ENCODE measurements at regions of chr21 and their contacts with region 1.

Region 1: GRCh38 chr21:37742532-37742931 is 173.7 kb downstream of the KCNJ6 start:
- DNase-seq: no peak
- ATAC-seq: no peak
- H3K4me3 ChIP-seq: no peak overlapping the region
- H3K4me1 ChIP-seq: no peaks in the 10 kb centered on the region
- CTCF ChIP-seq: no peak

Region 2: GRCh38 chr21:37686991-37687810 is 55.3 kb before region 1 on chr21:
- intact Hi-C with region 1: loop called in 1 of 2 experiments (anchors 10 kb)
- DNase-seq: peak in 1 of 3 donors; percentile 7
- ATAC-seq: peak; percentile 19
- H3K4me3 ChIP-seq: no peak overlapping the region
- H3K4me1 ChIP-seq: no peaks in the 10 kb centered on the region
- CTCF ChIP-seq: no peak

Region 3: DNA sequence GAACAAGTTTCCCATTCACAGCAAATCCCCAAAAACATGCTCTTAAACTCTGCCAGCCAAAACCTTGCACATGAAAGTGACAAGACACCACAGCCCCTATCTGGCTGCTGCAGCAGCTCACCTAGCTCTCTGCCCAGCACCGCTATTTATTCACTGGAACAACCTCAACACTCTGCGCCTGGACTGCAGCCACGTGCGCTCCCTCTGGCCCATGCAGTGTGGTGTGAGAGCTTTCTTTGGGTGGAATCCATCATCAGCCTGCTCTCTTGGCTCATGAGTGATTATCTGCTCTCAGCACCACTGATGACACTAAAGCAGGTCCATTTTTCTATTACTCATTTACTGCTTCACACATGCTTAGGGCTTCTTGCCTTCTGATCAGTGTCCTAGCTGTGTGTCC is 162.3 kb after region 1 on chr21:
- intact Hi-C with region 1: no loop called
- DNase-seq: no peak
- ATAC-seq: no peak
- H3K4me3 ChIP-seq: no peak overlapping the region
- H3K4me1 ChIP-seq: no peaks in the 10 kb centered on the region
- CTCF ChIP-seq: no peak

Region 4: DNA sequence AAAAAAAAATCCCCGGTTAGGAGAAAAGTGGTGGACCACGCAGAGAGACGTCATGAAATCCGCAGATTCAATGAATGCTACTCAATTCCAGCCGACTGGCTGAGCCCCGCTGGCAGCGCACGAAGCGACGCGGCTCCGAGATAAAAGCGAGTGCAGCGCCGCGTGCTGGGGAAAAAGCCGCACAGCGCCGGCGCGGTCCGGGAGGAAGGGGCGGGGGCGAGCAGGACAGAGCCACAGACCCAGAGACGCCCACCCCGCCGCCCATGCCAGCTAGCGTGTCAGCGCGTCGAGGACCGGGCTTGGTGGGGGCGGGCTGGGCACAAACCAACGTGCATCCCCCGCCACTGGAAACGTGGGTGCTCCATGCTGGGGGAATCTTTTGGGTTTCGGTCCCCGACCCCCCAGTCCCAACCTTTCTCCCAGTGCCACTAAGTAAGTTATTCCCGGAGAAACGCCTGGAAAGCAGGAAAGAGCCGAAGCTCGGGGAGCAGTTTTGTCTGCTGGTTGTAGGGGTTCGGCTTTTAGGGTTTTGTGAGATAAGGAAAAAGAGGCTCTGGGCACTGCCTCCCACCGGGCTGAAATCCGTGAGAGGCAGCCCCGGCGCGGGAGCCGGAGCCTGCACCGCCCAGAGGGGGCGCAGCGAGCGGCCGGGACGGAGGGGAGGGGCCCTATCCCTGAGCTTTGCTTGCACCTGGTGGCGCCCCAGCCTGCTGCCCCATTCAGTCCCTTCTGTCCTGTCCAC is 173.9 kb after region 1 on chr21 and contains the start of gene KCNJ6:
- intact Hi-C with region 1: no loop called
- DNase-seq: peak in 2 of 3 donors; percentile 17 to 38
- ATAC-seq: peak; percentile 56
- H3K4me3 ChIP-seq: no peak within 1 kb of the TSS
- H3K4me1 ChIP-seq: no peaks in the 10 kb centered on the region
- CTCF ChIP-seq: no peak
- total RNA-seq, gene KCNJ6: 0.09 to 0.19 (median 0.14) TPM

Measured in mucosa of descending colon (tissue), 3 donors.